Naive thymus-derived CD4-positive, alpha-beta T cell (primary cell): ENCODE measurements at regions of chr2 and their contacts with region 1.

Region 1: DNA sequence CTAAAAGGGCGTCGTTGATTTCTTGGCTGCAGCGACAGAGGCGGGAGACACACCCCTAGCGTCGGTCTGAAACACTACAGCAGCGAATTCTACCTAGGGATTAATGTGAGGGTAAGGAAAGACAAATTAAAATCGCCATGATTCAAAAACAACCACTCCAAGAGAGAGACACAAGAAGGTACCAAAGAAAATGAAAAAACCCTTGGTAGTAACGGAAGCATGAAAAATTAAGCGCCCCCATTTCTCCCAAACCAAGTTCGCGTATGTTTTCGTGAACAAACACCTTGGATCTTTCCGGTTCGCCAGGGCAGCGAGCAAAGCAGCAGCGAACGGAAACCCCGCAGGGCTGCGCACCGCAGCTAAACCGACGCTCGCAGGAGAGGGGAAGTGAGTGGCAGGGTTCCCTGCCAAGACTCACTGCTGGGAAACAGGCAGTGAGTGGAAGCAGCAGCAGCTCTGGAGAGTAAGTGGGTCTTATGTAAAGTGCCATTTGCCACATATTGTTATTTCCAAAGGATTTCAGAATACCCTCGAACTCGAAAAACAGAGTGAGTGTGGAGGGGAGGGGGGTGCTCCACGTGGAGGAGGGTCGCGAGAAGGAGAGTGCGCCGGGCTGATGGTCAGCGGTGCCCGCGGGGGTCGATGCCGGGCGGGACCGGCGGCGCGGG is 1.0 kb downstream of the PPP3R1 start:
- DNase-seq: peak; percentile 46 to 91 (median 82)
- ATAC-seq: peak; percentile 75
- H3K4me3 ChIP-seq: peak overlapping the region; percentile 66
- H3K4me3 Mint-ChIP-seq: peak overlapping the region in 6 of 10 donors; percentile 88 to 99 (median 91)
- H3K27ac ChIP-seq: peak overlapping the region; percentile 82
- H3K27ac Mint-ChIP-seq: peak overlapping the region in 7 of 9 donors; percentile 92 to 99 (median 94)
- H3K4me1 ChIP-seq: peaks cover 44 to 55% of the 10 kb centered on the region in 2 donors
- H3K4me1 Mint-ChIP-seq: peaks cover 35 to 44% (median 42%) of the 10 kb centered on the region in 7 donors
- H3K27me3 ChIP-seq: no peaks in the 10 kb centered on the region
- H3K27me3 Mint-ChIP-seq: peaks cover 0 to 2% (median 0%) of the 10 kb centered on the region in 5 donors

Region 2: DNA sequence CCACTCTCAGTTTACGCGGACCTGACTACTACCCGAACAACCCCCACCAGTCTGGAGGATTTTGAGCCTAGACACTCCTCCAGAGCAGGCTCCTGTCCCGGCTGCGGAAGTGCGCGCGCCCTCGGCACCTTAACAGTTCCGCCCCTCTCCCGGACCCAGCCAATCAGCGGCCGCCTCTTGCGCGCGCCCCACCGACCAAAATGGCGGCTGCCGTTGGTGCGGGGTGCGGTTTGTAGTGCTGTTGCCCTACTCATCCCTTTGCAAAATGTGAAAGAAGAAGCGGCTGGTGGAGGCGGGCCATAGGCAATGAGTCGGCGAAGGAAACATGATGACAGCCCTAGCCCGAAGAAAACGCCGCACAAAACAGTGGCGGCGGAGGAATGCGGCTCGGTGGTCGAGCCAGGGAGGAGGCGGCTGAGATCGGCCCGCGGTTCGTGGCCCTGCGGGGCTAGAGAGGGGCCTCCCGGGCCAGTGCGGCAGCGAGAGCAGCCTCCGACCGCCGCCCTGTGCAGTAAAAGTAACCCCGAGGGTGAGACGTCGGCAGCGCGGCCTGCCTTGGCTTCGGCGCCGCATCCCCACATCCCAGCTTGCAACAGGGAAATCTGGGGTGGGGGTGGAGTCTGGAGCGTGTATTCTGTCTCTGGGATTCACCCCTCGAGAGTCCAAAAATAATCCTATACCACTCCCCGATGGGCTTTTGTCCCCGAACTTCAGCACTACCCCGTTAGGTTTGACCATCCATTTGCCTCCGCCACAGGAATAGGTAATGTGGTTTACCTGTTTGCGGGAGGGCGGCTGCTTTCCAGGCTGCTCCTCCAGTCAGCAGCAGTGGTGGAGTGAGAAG is 854.0 kb before region 1 on chr2 and contains the start of gene ETAA1:
- CTCF ChIA-PET with region 1: no interaction called
- POLR2A ChIA-PET with region 1: no interaction called
- intact Hi-C with region 1: loop called (anchors 1 to 5 kb)
- DNase-seq: peak; percentile 90 to 94 (median 92)
- ATAC-seq: peak; percentile 99
- H3K4me3 ChIP-seq: peak within 1 kb of the TSS; percentile 98
- H3K4me3 Mint-ChIP-seq: peak within 1 kb of the TSS; percentile 92 to 99 (median 97)
- H3K27ac ChIP-seq: peak within 1 kb of the TSS; percentile 87
- H3K27ac Mint-ChIP-seq: peak within 1 kb of the TSS; percentile 97 to 99 (median 98)
- H3K4me1 ChIP-seq: no peaks in the 10 kb centered on the region
- H3K4me1 Mint-ChIP-seq: peaks cover 9 to 26% (median 18%) of the 10 kb centered on the region in 7 donors
- H3K27me3 ChIP-seq: no peaks in the 10 kb centered on the region
- H3K27me3 Mint-ChIP-seq: no peaks in the 10 kb centered on the region
- total RNA-seq, gene ETAA1: 6.6 to 16.4 (median 10.0) TPM

Region 3: DNA sequence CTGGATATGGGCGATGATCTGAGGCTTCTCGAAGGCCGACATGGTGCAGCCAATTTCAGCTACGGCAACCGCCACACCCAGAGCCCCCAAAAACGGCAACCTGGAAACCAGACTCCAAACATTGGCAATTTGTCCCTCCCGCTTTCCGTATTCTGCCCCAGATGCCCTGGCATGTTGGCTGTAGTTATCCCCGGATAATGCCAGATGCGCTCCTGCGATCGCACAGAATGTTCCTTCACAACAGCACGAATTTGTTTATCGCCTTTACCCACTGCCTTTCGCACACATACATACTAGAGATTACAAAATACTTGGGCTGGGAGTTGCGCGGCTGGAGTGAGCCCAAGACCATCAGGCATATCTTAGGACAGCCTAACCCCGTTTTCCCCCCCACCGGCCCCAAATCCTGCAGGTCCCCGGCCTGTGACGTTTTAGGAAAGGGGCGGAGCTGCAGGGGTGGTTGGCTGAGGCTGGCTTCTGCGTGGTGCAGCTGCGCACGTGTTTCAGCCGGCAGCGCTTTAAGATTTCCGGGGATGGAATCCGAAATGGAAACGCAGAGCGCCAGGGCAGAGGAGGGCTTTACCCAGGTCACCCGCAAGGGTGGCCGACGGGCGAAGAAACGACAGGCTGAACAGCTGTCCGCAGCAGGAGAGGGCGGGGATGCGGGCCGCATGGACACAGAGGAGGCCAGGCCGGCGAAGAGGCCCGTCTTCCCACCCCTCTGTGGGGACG is 93.8 kb before region 1 on chr2 and contains the start of gene PNO1:
- CTCF ChIA-PET with region 1: interaction called, 6 read pairs
- POLR2A ChIA-PET with region 1: interaction called, 31 read pairs
- intact Hi-C with region 1: loop called (anchors 1 kb)
- DNase-seq: peak; percentile 95 to 100 (median 98)
- ATAC-seq: peak; percentile 98
- H3K4me3 ChIP-seq: peak within 1 kb of the TSS; percentile 93
- H3K4me3 Mint-ChIP-seq: peak within 1 kb of the TSS; percentile 84 to 99 (median 94)
- H3K27ac ChIP-seq: peak within 1 kb of the TSS; percentile 87
- H3K27ac Mint-ChIP-seq: peak within 1 kb of the TSS; percentile 96 to 100 (median 99)
- H3K4me1 ChIP-seq: peaks cover 19 to 38% of the 10 kb centered on the region in 2 donors
- H3K4me1 Mint-ChIP-seq: peaks cover 30 to 72% (median 58%) of the 10 kb centered on the region in 7 donors
- H3K27me3 ChIP-seq: no peaks in the 10 kb centered on the region
- H3K27me3 Mint-ChIP-seq: no peaks in the 10 kb centered on the region
- total RNA-seq, gene PNO1: 11.0 to 31.0 (median 12.8) TPM

Region 4: GRCh38 chr2:68225119-68225632 is 26.1 kb before region 1 on chr2:
- CTCF ChIA-PET with region 1: interaction called, 4 read pairs
- POLR2A ChIA-PET with region 1: interaction called, 5 read pairs
- intact Hi-C with region 1: loop called (anchors 1 kb)
- DNase-seq: peak in 3 of 9 donors; percentile 14 to 27 (median 23)
- ATAC-seq: peak; percentile 86
- H3K4me3 ChIP-seq: no peak overlapping the region
- H3K4me3 Mint-ChIP-seq: peak overlapping the region in 9 of 10 donors; percentile 4 to 66 (median 52)
- H3K27ac ChIP-seq: no peak overlapping the region
- H3K27ac Mint-ChIP-seq: peak overlapping the region in 8 of 9 donors; percentile 5 to 61 (median 24)
- H3K4me1 ChIP-seq: peaks cover 20 to 41% of the 10 kb centered on the region in 2 donors
- H3K4me1 Mint-ChIP-seq: peaks cover 71 to 100% (median 98%) of the 10 kb centered on the region in 7 donors
- H3K27me3 ChIP-seq: no peaks in the 10 kb centered on the region
- H3K27me3 Mint-ChIP-seq: no peaks in the 10 kb centered on the region

Region 5: DNA sequence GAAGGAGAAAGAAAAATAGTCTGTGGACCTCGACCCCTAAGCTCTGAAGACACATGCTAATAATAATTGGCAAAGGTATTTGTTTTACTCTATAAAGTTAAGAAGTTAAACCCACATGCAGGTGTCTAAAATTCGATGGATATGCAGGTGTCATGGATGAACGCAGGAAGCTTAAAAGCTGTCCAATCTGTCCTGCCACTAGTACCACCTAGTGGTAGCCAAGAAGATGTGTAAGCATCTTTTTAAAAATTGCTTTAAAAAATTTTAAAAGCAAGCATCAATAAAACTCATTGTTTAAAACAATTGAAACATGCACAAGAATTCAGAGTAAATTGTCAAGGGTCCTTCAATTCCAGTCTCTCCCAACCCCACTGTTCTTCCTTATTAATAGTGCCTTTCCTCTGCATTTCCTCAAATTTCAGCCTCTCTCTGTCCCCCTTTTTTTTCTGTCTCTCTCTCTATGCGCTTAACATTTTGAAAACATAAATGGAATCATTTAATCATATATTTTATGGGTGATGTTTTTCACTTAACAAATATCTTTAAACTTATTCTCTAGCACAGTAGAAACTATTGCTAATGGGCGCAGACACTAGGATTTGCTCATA is 31.6 kb after region 1 on chr2:
- CTCF ChIA-PET with region 1: interaction called, 4 read pairs
- POLR2A ChIA-PET with region 1: no interaction called
- intact Hi-C with region 1: loop called (anchors 1 to 2 kb)
- DNase-seq: peak in 7 of 9 donors; percentile 28 to 54 (median 43)
- ATAC-seq: peak; percentile 81
- H3K4me3 ChIP-seq: no peak overlapping the region
- H3K4me3 Mint-ChIP-seq: no peak overlapping the region
- H3K27ac ChIP-seq: no peak overlapping the region
- H3K27ac Mint-ChIP-seq: no peak overlapping the region
- H3K4me1 ChIP-seq: no peaks in the 10 kb centered on the region
- H3K4me1 Mint-ChIP-seq: peaks cover 0 to 4% (median 0%) of the 10 kb centered on the region in 7 donors
- H3K27me3 ChIP-seq: no peaks in the 10 kb centered on the region
- H3K27me3 Mint-ChIP-seq: peaks cover 5 to 46% (median 16%) of the 10 kb centered on the region in 5 donors

Region 6: DNA sequence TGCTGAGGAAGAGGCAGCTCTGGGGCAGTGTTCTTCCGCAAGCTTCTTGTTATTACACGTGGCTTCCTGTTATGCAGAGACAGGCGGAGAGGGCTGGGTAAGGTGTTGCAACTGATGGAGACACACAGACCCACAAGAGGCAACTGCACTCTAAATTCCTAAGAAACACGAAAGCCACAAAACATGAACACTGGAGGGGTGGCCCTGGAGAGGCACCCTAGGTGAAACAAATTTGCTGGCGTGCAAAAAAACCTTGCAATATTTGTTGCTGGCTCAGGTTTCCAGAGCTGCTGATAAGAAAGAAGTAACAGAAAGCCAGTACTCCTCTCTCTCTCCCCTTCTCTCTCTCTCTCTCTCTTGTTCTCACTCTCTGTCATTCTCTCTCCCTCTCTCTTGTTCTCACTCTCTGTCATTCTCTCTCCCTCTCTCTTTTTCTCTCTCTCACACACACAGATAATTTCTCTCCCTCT is 515.1 kb after region 1 on chr2:
- CTCF ChIA-PET with region 1: no interaction called
- POLR2A ChIA-PET with region 1: no interaction called
- intact Hi-C with region 1: loop called in 1 of 2 experiments (anchors 5 kb)
- DNase-seq: peak; percentile 27 to 85 (median 78)
- ATAC-seq: peak; percentile 86
- H3K4me3 ChIP-seq: peak overlapping the region; percentile 36
- H3K4me3 Mint-ChIP-seq: peak overlapping the region; percentile 77 to 94 (median 82)
- H3K27ac ChIP-seq: peak overlapping the region; percentile 82
- H3K27ac Mint-ChIP-seq: peak overlapping the region in 8 of 9 donors; percentile 93 to 99 (median 97)
- H3K4me1 ChIP-seq: peaks cover 97 to 98% of the 10 kb centered on the region in 2 donors
- H3K4me1 Mint-ChIP-seq: peaks cover 70 to 100% (median 99%) of the 10 kb centered on the region in 7 donors
- H3K27me3 ChIP-seq: no peaks in the 10 kb centered on the region
- H3K27me3 Mint-ChIP-seq: no peaks in the 10 kb centered on the region